Lower leg skin (tissue), 4 donors: ENCODE measurements at regions of chr1 and their contacts with region 1.

Region 1: DNA sequence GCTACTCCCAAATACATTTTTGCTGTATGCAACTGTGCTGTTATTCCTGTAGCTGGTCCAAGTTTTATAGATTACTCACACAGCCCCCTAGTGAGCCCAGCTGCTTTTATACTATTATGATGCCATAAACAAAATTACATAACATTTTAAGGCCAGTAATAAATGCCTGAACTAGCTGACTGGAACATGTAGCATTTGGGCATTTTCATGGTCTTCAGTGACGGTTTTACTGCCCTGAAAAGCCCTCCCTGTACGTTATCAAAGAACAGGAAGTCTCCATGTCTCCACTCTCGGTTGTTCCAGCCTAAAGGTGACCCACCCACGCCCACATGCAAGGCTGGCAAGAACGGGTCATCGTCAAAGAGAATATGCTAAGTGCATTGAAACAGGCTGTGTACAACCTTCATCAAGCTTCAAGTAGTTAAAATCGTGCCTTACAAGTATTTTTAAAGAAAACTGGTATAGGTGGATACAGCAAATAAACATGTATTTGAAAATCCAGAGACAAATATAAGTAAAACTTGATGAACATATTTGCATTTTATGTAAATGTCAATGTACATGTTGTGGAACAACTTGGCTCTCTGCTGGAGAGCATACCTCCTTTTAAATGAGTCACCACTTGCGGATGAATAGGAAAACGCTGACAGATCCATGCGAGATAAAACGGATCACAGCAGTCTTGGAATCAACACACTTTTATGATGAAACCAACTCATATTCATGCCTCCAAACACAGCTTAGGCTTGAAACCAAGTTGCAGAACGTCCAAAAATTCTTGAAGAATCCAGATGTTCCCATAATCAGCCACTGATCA is 520.5 kb downstream of the SMYD3 start:
- DNase-seq: no peak
- H3K4me3 ChIP-seq: no peak overlapping the region
- CTCF ChIP-seq: no peak
- POLR2A ChIP-seq: no peak

Region 2: GRCh38 chr1:245605480-245606161 is 381.0 kb before region 1 on chr1:
- intact Hi-C with region 1: no loop called
- DNase-seq: peak in 1 of 2 donors; percentile 77
- H3K4me3 ChIP-seq: no peak overlapping the region
- CTCF ChIP-seq: no peak
- POLR2A ChIP-seq: no peak

Region 3: GRCh38 chr1:247857069-247857984 is 1870.7 kb after region 1 on chr1 and contains the start of gene TRIM58:
- intact Hi-C with region 1: loop called (anchors 5 kb)
- DNase-seq: peak in 1 of 2 donors; percentile 89
- H3K4me3 ChIP-seq: peak within 1 kb of the TSS; percentile 8
- CTCF ChIP-seq: no peak
- POLR2A ChIP-seq: no peak
- total RNA-seq, gene TRIM58: 0.29 to 8.6 (median 2.0) TPM